ENCODE measurements at regions of chr10 and their contacts with region 1.

Region 1: GRCh38 chr10:97334370-97335175 is at the start of gene FRAT2:
- H3K4me3 ChIP-seq: peak within 1 kb of the TSS; percentile 66
- H3K27ac ChIP-seq: peak within 1 kb of the TSS; percentile 99
- H3K4me1 ChIP-seq: peaks cover 18% of the 10 kb centered on the region
- CTCF ChIP-seq: no peak

Region 2: GRCh38 chr10:97292097-97292862 is 42.3 kb before region 1 on chr10 and contains the start of gene ARHGAP19:
- CTCF ChIA-PET with region 1: no interaction called
- POLR2A ChIA-PET with region 1: interaction called, 18 read pairs
- H3K4me3 ChIP-seq: peak within 1 kb of the TSS; percentile 62
- H3K27ac ChIP-seq: peak within 1 kb of the TSS; percentile 86
- H3K4me1 ChIP-seq: no peaks in the 10 kb centered on the region
- CTCF ChIP-seq: peak; percentile 90

Region 3: GRCh38 chr10:97318772-97319651 is 15.6 kb before region 1 on chr10 and contains the start of gene FRAT1:
- CTCF ChIA-PET with region 1: interaction called, 6 read pairs
- POLR2A ChIA-PET with region 1: interaction called, 27 read pairs
- H3K4me3 ChIP-seq: peak within 1 kb of the TSS; percentile 57
- H3K27ac ChIP-seq: peak within 1 kb of the TSS; percentile 100
- H3K4me1 ChIP-seq: no peaks in the 10 kb centered on the region; the same call in 1 of the 2 replicates
- CTCF ChIP-seq: no peak

Region 4: GRCh38 chr10:97400665-97401454 is 66.3 kb after region 1 on chr10 and contains the start of gene RRP12:
- CTCF ChIA-PET with region 1: no interaction called
- POLR2A ChIA-PET with region 1: interaction called, 18 read pairs
- H3K4me3 ChIP-seq: peak within 1 kb of the TSS; percentile 79
- H3K27ac ChIP-seq: peak within 1 kb of the TSS; percentile 52
- H3K4me1 ChIP-seq: 0 out of 2 replicates have a peak, but pooled peaks cover 4% of the 10 kb centered on the region
- CTCF ChIP-seq: peak; percentile 58; the same call in 1 of the 2 replicates